GM23248 (cell line): ENCODE measurements at regions of chr12 and their contacts with region 1.

Region 1: GRCh38 chr12:50055831-50056638 is 1.4 kb upstream of the ASIC1 start:
- DNase-seq: peak; percentile 69
- H3K4me3 ChIP-seq: 0 out of 2 replicates have a peak overlapping the region, but pooled peaks have one; percentile 35
- H3K27ac ChIP-seq: no peak overlapping the region
- H3K4me1 ChIP-seq: no peaks in the 10 kb centered on the region
- H3K27me3 ChIP-seq: peaks cover 9% of the 10 kb centered on the region; the same call in 1 of the 2 replicates

Region 2: GRCh38 chr12:49776413-49776812 is 279.6 kb before region 1 on chr12:
- in situ Hi-C with region 1: loop called (anchors 10 kb)
- DNase-seq: peak; percentile 90
- H3K4me3 ChIP-seq: no peak overlapping the region
- H3K27ac ChIP-seq: no peak overlapping the region
- H3K4me1 ChIP-seq: no peaks in the 10 kb centered on the region
- H3K27me3 ChIP-seq: no peaks in the 10 kb centered on the region

Region 3: GRCh38 chr12:49967042-49967776 is 88.8 kb before region 1 on chr12:
- in situ Hi-C with region 1: loop called (anchors 5 kb)
- DNase-seq: peak; percentile 89
- H3K4me3 ChIP-seq: peak overlapping the region; percentile 72
- H3K27ac ChIP-seq: no peak overlapping the region
- H3K4me1 ChIP-seq: no peaks in the 10 kb centered on the region
- H3K27me3 ChIP-seq: peaks cover 18% of the 10 kb centered on the region